ENCODE measurements at regions of chr19 and their contacts with region 1.

Region 1: DNA sequence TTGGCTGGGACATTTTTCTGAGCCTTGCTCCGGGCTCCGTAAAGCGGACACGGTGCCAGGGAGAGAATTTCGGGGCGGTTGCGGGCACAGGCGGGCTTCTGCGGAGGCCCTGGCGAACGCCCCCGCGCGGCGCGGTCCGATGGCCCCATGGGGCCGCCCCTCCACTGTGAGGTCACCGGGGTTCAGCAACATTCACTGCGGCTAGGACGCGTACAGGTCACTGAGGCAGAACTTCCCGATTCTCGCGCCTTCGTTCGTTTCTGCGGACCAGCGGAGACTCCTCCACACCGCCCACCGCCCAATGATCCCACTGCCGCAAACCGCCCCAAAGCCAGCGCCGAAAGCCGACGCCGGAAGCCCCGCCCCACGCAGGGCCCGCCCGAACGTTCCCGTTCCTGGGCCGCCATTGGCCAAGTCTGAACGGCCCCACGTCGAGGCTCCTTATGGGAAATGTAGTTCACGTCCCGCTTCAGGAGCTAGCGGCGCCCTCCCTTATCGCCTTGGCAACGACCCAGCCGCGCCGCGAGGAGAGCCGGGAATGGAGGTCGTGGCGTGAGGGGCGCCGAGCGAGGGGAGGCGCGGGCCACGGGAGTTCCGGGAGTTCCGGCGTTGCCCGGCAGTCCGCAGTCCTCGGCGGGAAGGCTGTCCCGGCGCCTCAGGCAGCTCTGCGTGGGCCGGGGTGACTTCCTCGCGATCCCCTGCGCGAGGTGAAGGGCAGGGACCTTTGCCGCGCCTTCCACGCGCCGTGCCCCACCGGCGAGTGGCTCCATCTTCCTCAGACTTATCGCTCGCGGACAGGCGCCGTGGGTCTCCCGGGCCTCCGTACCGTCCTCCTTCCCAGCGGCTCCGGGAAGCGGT is at the start of gene ZNF584:
- DNase-seq: peak; percentile 96
- ATAC-seq: peak; percentile 96
- H3K4me3 ChIP-seq: peak within 1 kb of the TSS; percentile 58 to 93 (median 83)
- H3K4me3 Mint-ChIP-seq: peak within 1 kb of the TSS; percentile 97
- H3K27ac ChIP-seq: peak within 1 kb of the TSS; percentile 82 to 93
- H3K27ac Mint-ChIP-seq: peak within 1 kb of the TSS; percentile 98
- H3K4me1 ChIP-seq: peaks cover 11 to 20% of the 10 kb centered on the region in 2 donors
- H3K4me1 Mint-ChIP-seq: peaks cover 33% of the 10 kb centered on the region
- H3K27me3 ChIP-seq: no peaks in the 10 kb centered on the region
- H3K27me3 Mint-ChIP-seq: no peaks in the 10 kb centered on the region
- CTCF ChIP-seq: no peak
- total RNA-seq, gene ZNF584: 12.3 and 14.0 TPM in 2 replicates

Region 2: GRCh38 chr19:58278157-58279041 is 130.0 kb before region 1 on chr19 and contains the start of gene ZNF8:
- CTCF ChIA-PET with region 1: no interaction called
- POLR2A ChIA-PET with region 1: no interaction called
- intact Hi-C with region 1: loop called (anchors 1 kb)
- DNase-seq: peak; percentile 96
- ATAC-seq: peak; percentile 98
- H3K4me3 ChIP-seq: peak within 1 kb of the TSS; percentile 72 to 98 (median 95)
- H3K4me3 Mint-ChIP-seq: peak within 1 kb of the TSS; percentile 91
- H3K27ac ChIP-seq: peak within 1 kb of the TSS; percentile 73 to 86
- H3K27ac Mint-ChIP-seq: peak within 1 kb of the TSS; percentile 93
- H3K4me1 ChIP-seq: peaks cover 13 to 19% of the 10 kb centered on the region in 2 donors
- H3K4me1 Mint-ChIP-seq: peaks cover 38% of the 10 kb centered on the region
- H3K27me3 ChIP-seq: no peaks in the 10 kb centered on the region
- H3K27me3 Mint-ChIP-seq: no peaks in the 10 kb centered on the region
- CTCF ChIP-seq: no peak
- total RNA-seq, gene ZNF8: 7.9 and 8.0 TPM in 2 replicates

Region 3: GRCh38 chr19:58346961-58347931 is 61.1 kb before region 1 on chr19:
- CTCF ChIA-PET with region 1: interaction called, 4 read pairs
- POLR2A ChIA-PET with region 1: interaction called, 4 read pairs
- intact Hi-C with region 1: loop called (anchors 5 kb)
- DNase-seq: peak; percentile 91
- ATAC-seq: peak; percentile 96
- H3K4me3 ChIP-seq: peak overlapping the region; percentile 47 to 75 (median 62)
- H3K4me3 Mint-ChIP-seq: peak overlapping the region; percentile 96
- H3K27ac ChIP-seq: peak overlapping the region; percentile 59 to 77
- H3K27ac Mint-ChIP-seq: peak overlapping the region; percentile 89
- H3K4me1 ChIP-seq: peaks cover 16 to 28% of the 10 kb centered on the region in 2 donors
- H3K4me1 Mint-ChIP-seq: peaks cover 30% of the 10 kb centered on the region
- H3K27me3 ChIP-seq: no peaks in the 10 kb centered on the region
- H3K27me3 Mint-ChIP-seq: no peaks in the 10 kb centered on the region
- CTCF ChIP-seq: no peak

Region 4: DNA sequence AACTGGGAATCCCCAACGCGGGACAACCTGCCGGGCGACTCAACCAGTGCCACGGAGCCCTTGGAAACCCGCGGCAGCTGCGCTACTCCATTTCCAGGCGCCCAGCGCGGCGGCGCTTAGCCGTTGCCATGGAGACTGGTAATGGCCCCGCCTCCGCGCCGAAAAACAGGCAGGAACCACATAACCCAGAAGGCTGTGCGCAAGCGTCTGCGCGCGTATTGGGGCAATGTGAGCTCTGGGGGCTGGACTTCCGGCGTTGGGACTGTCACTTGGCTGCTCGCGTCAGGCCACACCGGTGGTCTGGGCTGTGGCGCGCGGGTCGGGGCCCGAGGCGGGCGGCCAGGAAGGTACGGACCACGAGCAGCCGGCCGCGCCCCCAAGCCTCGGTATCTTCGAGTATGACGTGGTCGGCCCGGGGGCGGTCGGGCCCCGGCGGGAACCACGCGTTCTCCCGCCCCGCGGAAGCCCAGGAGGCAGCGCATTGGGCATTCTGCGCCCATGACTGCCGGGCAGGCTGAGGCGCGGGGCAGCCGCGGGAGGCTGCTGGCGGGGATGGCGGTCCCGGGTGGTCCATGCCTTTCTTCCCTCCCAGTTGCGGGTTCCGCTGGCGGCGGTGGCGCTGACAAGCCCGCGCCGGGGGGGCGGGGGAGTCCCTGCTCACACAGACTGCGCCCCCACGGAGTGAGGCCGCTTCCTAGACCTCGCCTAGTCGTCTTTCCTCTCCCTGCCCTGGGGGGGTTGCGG is 43.1 kb after region 1 on chr19 and contains the start of gene ZNF324B:
- CTCF ChIA-PET with region 1: interaction called, 5 read pairs
- POLR2A ChIA-PET with region 1: no interaction called
- intact Hi-C with region 1: loop called (anchors 1 kb)
- DNase-seq: peak; percentile 97
- ATAC-seq: peak; percentile 97
- H3K4me3 ChIP-seq: peak within 1 kb of the TSS; percentile 55 to 81 (median 73)
- H3K4me3 Mint-ChIP-seq: peak within 1 kb of the TSS; percentile 93
- H3K27ac ChIP-seq: peak within 1 kb of the TSS in 1 of 2 donors; percentile 66
- H3K27ac Mint-ChIP-seq: peak within 1 kb of the TSS; percentile 85
- H3K4me1 ChIP-seq: peaks cover 5 to 12% of the 10 kb centered on the region in 2 donors
- H3K4me1 Mint-ChIP-seq: peaks cover 20% of the 10 kb centered on the region
- H3K27me3 ChIP-seq: peaks cover 0 to 24% (median 2%) of the 10 kb centered on the region in 4 experiments
- H3K27me3 Mint-ChIP-seq: peaks cover 13% of the 10 kb centered on the region
- CTCF ChIP-seq: no peak
- total RNA-seq, gene ZNF324B: 15.0 and 17.4 TPM in 2 replicates

Region 5: GRCh38 chr19:58572818-58573657 is 164.7 kb after region 1 on chr19 and contains the start of gene MZF1:
- CTCF ChIA-PET with region 1: no interaction called
- POLR2A ChIA-PET with region 1: no interaction called
- intact Hi-C with region 1: loop called (anchors 1 kb)
- DNase-seq: peak; percentile 100
- ATAC-seq: peak; percentile 62
- H3K4me3 ChIP-seq: peak within 1 kb of the TSS; percentile 59 to 77 (median 74)
- H3K4me3 Mint-ChIP-seq: peak within 1 kb of the TSS; percentile 95
- H3K27ac ChIP-seq: peak within 1 kb of the TSS; percentile 99
- H3K27ac Mint-ChIP-seq: peak within 1 kb of the TSS; percentile 99
- H3K4me1 ChIP-seq: peaks cover 25 to 37% of the 10 kb centered on the region in 2 donors
- H3K4me1 Mint-ChIP-seq: peaks cover 41% of the 10 kb centered on the region
- H3K27me3 ChIP-seq: no peaks in the 10 kb centered on the region
- H3K27me3 Mint-ChIP-seq: no peaks in the 10 kb centered on the region
- CTCF ChIP-seq: no peak
- total RNA-seq, gene MZF1: 79.4 and 81.4 TPM in 2 replicates

Measured in B cell (primary cell).